ENCODE measurements at regions of chr15 and their contacts with region 1.

Region 1: GRCh38 chr15:31472636-31473384 is 146.2 kb downstream of the KLF13 start:
- DNase-seq: peak; percentile 69
- H3K4me3 Mint-ChIP-seq: peak overlapping the region; percentile 66
- H3K27ac Mint-ChIP-seq: peak overlapping the region; percentile 90
- H3K4me1 Mint-ChIP-seq: peaks cover 39% of the 10 kb centered on the region
- H3K27me3 Mint-ChIP-seq: no peaks in the 10 kb centered on the region

Region 2: DNA sequence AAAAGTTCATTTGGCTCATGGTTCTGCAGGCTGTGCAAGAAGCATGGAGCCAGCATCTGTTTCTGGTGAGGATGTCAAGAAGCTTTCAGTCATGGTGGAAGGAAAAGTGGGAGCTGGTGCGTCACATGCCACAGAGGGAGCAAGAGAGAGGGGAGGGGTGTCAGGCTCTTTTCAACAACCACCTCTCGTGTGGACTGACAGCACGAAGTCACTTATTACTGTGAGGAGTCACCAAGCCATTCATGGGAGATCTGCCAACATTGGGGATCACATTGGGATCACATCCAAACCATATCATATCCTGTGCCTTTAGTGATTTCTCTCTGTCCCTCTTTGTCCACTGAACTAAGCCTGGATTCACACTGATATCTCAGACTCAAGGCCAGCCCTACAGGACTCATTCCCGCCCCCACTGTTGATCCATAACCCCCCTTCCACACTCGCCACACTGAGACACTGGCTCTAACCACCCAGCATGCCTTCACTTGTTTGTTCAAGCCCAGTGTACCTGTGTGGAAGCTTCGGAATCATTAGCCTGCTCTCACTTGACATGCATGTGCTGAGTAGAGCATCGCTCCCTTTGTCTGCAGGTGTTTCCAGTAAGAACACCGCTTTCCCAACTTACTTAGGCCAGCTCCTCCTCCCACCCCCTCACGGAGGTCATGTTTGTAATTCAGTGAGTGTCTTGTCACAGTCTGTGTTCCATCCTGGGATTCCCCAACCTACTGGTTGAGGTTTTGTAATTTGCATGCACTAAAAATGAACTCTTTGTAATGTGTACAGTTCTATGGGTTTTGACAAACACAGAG is 14.0 kb before region 1 on chr15:
- intact Hi-C with region 1: loop called (anchors 1 kb)
- DNase-seq: no peak
- H3K4me3 Mint-ChIP-seq: peak overlapping the region; percentile 48
- H3K27ac Mint-ChIP-seq: peak overlapping the region; percentile 80
- H3K4me1 Mint-ChIP-seq: peaks cover 26% of the 10 kb centered on the region
- H3K27me3 Mint-ChIP-seq: no peaks in the 10 kb centered on the region

Region 3: GRCh38 chr15:31483053-31483985 is 10.5 kb after region 1 on chr15:
- intact Hi-C with region 1: loop called (anchors 1 kb)
- DNase-seq: peak; percentile 44
- H3K4me3 Mint-ChIP-seq: peak overlapping the region; percentile 91
- H3K27ac Mint-ChIP-seq: peak overlapping the region; percentile 95
- H3K4me1 Mint-ChIP-seq: peaks cover 53% of the 10 kb centered on the region
- H3K27me3 Mint-ChIP-seq: no peaks in the 10 kb centered on the region

Region 4: DNA sequence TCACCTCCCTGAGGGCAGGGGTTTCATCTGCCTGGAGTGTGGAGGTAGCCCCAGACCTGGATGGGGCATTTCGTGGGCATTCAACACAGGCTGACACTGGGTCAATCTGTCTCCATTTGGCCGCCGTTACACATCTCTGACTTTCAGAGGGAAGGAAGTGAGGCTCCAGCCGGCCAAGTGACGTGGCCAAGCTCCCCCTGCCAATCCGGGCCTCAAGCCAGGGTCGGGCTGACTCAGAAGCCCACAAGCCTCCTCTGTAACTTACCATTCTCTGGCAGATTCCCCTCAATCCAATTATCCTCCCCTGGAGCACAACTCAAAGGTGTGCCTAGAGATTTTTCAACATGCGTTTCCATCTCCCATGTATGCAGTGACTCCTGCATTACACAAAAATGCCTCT is 81.5 kb after region 1 on chr15:
- intact Hi-C with region 1: no loop called
- DNase-seq: no peak
- H3K4me3 Mint-ChIP-seq: no peak overlapping the region
- H3K27ac Mint-ChIP-seq: no peak overlapping the region
- H3K4me1 Mint-ChIP-seq: no peaks in the 10 kb centered on the region
- H3K27me3 Mint-ChIP-seq: no peaks in the 10 kb centered on the region

Measured in activated T-helper 2 cell treated with anti-CD3 and anti-CD28 coated beads, Interferon-gamma antibody, Interleukin-2, Interleukin-4, amounts not matched to agents 10 μg/mL and 5 μg/mL and 100 μg/mL, durations not matched to agents 14 hours and 24 hours and 36 hours (primary cell).